Endothelial cell of umbilical vein (primary cell): ENCODE measurements at regions of chr9 and their contacts with region 1.

Region 1: DNA sequence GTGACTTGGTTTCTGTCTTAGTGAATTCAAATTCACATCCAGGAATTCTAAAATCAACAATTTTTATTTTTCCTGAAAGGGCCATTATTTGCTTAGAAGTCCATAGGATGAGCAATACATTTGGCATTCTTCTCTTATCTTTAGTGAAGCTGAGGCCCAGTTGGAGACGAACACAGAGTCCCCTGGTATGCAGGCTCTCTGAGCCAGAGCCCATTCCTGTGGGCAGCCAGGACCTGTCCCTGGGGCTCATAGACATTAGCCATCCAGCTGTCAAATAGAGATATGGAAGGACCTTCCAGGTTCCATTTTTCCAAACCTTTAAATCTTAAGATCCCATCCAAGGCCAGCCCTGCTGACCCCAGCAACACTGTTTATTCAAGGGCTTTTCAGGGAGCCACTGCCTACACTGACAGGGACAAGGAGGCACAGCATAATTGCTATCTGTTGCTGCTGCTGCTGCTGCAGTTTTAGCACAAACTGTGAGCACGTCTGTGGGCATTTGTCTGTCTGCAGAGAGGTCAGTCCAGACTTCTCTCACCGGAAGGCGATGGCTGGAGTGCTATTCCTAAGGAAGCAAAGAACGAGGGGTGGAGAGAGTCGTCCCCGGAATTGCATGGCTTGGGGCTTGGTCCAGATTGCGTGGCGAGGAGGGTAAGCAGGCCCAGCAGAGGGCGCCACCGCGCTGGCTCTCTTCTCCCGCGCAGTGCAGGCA is 639.0 kb downstream of the CCDC171 start:
- DNase-seq: peak; percentile 60
- H3K4me3 ChIP-seq: no peak overlapping the region
- H3K27ac ChIP-seq: no peak overlapping the region
- H3K4me1 ChIP-seq: peaks cover 5% of the 10 kb centered on the region
- H3K27me3 ChIP-seq: no peaks in the 10 kb centered on the region
- CTCF ChIP-seq: peak; percentile 79 to 95
- POLR2A ChIP-seq: no peak

Region 2: DNA sequence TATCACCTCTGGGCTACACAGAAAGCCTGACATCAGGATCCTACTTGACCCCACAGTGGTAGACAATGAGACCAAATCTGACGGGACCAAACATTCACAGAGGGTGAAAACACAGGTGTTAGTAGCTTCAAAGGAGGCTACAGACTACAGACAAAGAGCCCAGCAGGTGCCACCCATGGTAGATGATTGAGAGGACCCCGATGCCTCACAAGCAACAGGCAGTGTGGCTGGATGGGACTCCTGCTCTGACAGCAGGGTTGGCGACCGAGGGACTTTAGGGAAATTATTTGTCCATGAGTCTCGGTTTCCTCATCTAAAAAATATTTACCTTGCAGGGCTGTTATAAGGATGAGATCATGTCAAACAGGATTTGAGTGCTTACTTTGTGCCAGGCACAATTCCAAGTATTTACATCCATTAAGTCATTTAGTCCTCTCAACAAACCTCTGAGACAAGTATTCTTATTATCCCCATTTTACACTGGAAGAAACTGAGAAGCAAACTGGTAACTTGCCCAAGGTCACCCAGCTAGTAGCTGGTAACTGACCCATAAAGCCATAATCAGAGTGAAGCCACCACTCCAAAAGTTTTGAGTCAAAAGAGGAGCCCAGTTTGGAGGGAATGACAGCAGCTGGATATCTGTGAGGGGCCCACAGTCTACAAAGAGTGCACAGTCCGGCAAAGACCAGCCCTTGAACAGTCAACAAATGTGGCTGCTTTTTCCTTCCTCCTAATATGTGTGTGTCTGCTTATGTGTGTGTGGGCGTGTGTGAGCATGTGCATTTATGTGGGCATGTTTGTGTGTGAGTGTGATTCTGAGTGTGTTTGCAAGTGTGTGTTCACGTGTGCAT is 176.6 kb after region 1 on chr9:
- CTCF ChIA-PET with region 1: no interaction called
- POLR2A ChIA-PET with region 1: no interaction called
- dilution Hi-C with region 1: no loop called
- intact Hi-C with region 1: loop called (anchors 10 kb)
- DNase-seq: peak; percentile 28
- H3K4me3 ChIP-seq: no peak overlapping the region
- H3K27ac ChIP-seq: no peak overlapping the region
- H3K4me1 ChIP-seq: peaks cover 27% of the 10 kb centered on the region
- H3K27me3 ChIP-seq: no peaks in the 10 kb centered on the region
- CTCF ChIP-seq: no peak
- POLR2A ChIP-seq: no peak

Region 3: GRCh38 chr9:16530669-16531642 is 339.1 kb after region 1 on chr9:
- CTCF ChIA-PET with region 1: no interaction called
- POLR2A ChIA-PET with region 1: no interaction called
- dilution Hi-C with region 1: no loop called
- intact Hi-C with region 1: loop called (anchors 5 kb)
- DNase-seq: no peak
- H3K4me3 ChIP-seq: no peak overlapping the region
- H3K27ac ChIP-seq: no peak overlapping the region
- H3K4me1 ChIP-seq: peaks cover 34% of the 10 kb centered on the region
- H3K27me3 ChIP-seq: no peaks in the 10 kb centered on the region
- CTCF ChIP-seq: no peak
- POLR2A ChIP-seq: no peak

Region 4: GRCh38 chr9:16705121-16705604 is 513.3 kb after region 1 on chr9:
- CTCF ChIA-PET with region 1: no interaction called
- POLR2A ChIA-PET with region 1: no interaction called
- dilution Hi-C with region 1: no loop called
- intact Hi-C with region 1: loop called (anchors 1 kb)
- DNase-seq: peak; percentile 99
- H3K4me3 ChIP-seq: peak overlapping the region in 2 of 3 experiments; percentile 57 to 97
- H3K27ac ChIP-seq: peak overlapping the region; percentile 99
- H3K4me1 ChIP-seq: peaks cover 51% of the 10 kb centered on the region
- H3K27me3 ChIP-seq: no peaks in the 10 kb centered on the region
- CTCF ChIP-seq: no peak
- POLR2A ChIP-seq: peak; percentile 44

Region 5: DNA sequence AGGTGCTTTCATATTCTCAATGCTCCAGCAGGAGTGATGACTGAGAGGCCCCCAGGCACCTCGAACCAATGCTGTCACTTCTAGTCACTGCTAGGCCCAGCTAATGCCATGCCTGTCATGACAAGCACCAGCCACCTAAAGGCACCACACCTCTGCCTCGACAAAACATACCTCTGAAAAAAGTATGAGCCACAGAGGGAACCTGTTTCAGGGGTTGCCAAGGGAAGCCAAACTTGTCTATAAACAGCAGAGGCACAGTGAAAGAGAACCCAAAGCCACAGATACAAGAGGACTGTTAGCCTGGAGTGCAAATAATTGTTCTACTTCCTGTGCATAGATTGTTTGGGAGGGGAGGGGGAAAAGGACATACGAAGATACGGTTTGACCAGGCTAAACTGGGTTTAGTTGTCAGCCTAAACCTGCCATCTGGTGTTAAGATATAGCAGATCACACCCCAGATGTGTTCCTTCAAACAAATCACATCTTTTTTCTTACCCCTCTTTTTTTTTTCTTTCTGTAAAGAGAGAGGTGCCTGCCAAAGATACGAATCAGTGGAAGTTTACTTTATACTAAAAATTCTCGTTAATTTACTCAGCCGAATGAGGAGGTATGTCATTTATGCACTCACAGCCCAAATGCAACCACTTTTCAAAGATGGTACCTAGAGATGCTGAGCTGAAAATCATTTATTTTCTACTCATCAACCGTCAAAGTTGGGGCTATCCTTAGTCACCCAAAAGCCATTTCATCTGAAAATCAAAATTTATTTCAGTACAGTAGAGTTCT is 632.9 kb after region 1 on chr9:
- CTCF ChIA-PET with region 1: no interaction called
- POLR2A ChIA-PET with region 1: no interaction called
- dilution Hi-C with region 1: no loop called
- intact Hi-C with region 1: loop called (anchors 1 kb)
- DNase-seq: peak; percentile 24
- H3K4me3 ChIP-seq: no peak overlapping the region
- H3K27ac ChIP-seq: no peak overlapping the region
- H3K4me1 ChIP-seq: peaks cover 4% of the 10 kb centered on the region
- H3K27me3 ChIP-seq: no peaks in the 10 kb centered on the region
- CTCF ChIP-seq: peak in 1 of 2 donors; percentile 4
- POLR2A ChIP-seq: no peak

Region 6: DNA sequence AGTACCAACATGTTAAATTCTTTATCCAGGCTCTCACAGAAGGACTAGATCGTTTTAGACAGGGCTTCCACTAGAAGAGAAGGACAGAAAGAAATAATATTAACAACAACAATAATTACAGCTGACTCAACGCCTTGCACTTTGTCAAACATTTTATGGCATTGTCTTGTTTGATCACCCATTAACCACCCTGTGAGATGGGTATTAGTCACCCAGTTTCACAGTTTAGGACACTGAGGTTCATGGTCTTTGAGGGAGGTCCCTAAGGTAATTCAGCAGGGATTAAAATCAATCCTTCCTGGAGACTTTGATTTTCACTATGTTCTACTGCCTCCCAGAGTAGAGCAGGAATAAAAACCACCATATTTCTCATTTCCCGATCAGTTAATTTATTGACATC is 730.0 kb after region 1 on chr9:
- CTCF ChIA-PET with region 1: no interaction called
- POLR2A ChIA-PET with region 1: no interaction called
- dilution Hi-C with region 1: no loop called
- intact Hi-C with region 1: loop called (anchors 1 kb)
- DNase-seq: no peak
- H3K4me3 ChIP-seq: no peak overlapping the region
- H3K27ac ChIP-seq: no peak overlapping the region
- H3K4me1 ChIP-seq: no peaks in the 10 kb centered on the region
- H3K27me3 ChIP-seq: no peaks in the 10 kb centered on the region
- CTCF ChIP-seq: no peak
- POLR2A ChIP-seq: no peak

Region 7: DNA sequence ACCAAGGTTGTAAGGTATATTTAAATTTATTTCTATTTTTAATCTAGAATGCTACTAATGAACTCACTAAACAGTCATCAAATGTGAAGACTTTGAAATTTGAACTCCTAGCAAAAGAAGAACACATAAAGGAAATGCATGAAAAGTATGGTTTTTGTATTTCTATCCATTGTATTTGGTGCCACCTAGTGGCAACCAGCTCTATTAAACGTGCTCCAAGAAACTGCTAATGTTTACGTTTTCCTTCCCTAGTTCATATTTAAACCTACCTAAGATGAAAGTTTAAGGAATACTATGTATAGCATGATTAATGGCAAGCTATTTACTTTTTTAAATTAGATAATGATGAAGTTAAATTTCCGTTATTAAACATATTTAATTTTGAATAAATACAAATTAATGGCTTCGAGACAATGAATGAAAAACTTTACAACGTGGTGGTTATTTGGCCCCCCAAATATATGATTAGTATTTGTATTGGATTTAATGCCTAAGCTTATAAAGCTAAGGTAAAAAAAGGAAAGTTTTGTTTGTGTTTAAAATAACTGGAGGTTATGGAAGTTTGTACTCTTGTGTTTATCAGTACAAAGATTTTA is 1271.1 kb after region 1 on chr9:
- CTCF ChIA-PET with region 1: no interaction called
- POLR2A ChIA-PET with region 1: no interaction called
- dilution Hi-C with region 1: no loop called
- intact Hi-C with region 1: loop called (anchors 1 kb)
- DNase-seq: peak; percentile 68
- H3K4me3 ChIP-seq: no peak overlapping the region
- H3K27ac ChIP-seq: no peak overlapping the region
- H3K4me1 ChIP-seq: no peaks in the 10 kb centered on the region
- H3K27me3 ChIP-seq: no peaks in the 10 kb centered on the region
- CTCF ChIP-seq: peak; percentile 43 to 54
- POLR2A ChIP-seq: no peak